MCF 10A (cell line): ENCODE measurements at regions of chr11 and their contacts with region 1.

Region 1: GRCh38 chr11:119205574-119206510 is at the start of gene CBL:
- DNase-seq: peak; percentile 91
- H3K4me3 Mint-ChIP-seq: peak within 1 kb of the TSS; percentile 92
- H3K27ac Mint-ChIP-seq: peak within 1 kb of the TSS; percentile 68
- H3K4me1 Mint-ChIP-seq: peaks cover 6% of the 10 kb centered on the region
- H3K27me3 Mint-ChIP-seq: no peaks in the 10 kb centered on the region
- CTCF ChIP-seq: peak; percentile 90
- total RNA-seq, gene CBL: 35.5 and 45.7 TPM in 2 replicates

Region 2: DNA sequence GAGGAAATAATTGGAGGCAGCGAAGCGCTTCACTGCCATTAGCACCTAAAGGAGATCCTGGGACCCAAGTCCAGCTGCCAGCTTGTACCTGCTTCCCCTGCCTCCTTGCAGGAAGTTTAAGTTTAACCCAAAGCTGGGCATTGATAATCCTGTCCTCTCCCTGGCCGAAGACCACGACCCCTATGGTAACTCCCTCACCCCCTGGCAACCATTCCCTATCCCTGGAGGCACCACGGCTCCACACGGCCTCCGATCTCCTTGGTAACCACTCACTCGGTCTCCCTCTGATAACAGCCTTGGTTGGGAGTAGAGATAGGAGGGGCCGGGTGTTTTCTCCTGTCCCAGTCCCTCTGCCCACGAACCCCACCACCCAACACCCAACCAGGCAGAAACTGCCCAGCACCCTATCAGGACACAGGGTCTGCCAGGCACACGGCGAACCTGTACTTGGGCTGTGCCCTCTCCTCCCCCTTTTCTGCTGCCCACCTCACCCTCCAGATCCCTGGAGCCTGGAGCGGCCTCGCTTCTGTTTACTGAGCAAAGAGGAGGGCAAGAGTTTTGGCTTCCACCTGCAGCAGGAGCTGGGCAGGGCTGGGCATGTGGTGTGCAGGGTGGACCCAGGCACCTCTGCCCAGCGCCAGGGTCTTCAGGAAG is 19.7 kb before region 1 on chr11:
- CTCF ChIA-PET with region 1: no interaction called
- POLR2A ChIA-PET with region 1: no interaction called
- intact Hi-C with region 1: no loop called
- DNase-seq: no peak
- H3K4me3 Mint-ChIP-seq: no peak overlapping the region
- H3K27ac Mint-ChIP-seq: no peak overlapping the region
- H3K4me1 Mint-ChIP-seq: peaks cover 6% of the 10 kb centered on the region
- H3K27me3 Mint-ChIP-seq: peaks cover 22% of the 10 kb centered on the region
- CTCF ChIP-seq: no peak

Region 3: GRCh38 chr11:119218141-119218878 is 12.5 kb after region 1 on chr11:
- CTCF ChIA-PET with region 1: interaction called, 7 read pairs
- POLR2A ChIA-PET with region 1: interaction called, 8 read pairs
- intact Hi-C with region 1: loop called (anchors 1 kb)
- DNase-seq: peak; percentile 91
- H3K4me3 Mint-ChIP-seq: peak overlapping the region; percentile 47
- H3K27ac Mint-ChIP-seq: peak overlapping the region; percentile 88
- H3K4me1 Mint-ChIP-seq: peaks cover 16% of the 10 kb centered on the region
- H3K27me3 Mint-ChIP-seq: no peaks in the 10 kb centered on the region
- CTCF ChIP-seq: no peak

Region 4: DNA sequence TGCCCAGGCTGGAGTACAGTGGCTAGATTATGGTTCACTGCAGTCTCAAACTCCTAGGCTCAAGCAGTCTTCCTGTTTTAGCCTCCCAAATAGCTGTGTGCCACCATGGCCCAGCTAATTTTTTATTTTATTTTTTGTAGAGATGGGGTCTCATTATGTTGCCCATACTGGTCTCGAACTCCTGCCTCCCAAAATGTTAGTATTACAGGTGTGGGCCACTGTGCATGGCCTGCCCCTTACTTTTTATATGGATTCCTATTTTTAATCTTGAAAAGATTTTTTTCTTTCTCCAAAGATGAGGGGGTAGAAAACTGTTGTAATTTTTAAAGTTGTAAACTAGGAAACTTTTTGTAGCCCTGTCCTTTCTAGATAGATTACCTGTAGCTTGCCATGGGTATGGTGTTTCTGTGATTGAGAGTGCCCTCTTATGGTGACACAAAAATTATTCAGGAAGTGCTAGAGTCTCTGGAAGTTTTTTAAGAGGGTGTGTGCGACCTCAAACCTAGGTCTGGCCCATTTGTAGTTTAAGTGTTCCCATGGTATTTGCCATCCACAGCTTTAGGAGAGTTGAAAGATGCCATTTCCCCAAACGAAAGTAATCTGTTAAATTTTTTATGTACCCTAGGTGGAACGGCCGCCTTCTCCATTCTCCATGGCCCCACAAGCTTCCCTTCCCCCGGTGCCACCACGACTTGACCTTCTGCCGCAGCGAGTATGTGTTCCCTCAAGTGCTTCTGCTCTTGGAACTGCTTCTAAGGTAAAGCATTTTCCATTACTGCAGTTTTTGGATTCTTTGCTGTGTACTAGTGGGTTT is 78.7 kb after region 1 on chr11:
- CTCF ChIA-PET with region 1: interaction called, 22 read pairs
- POLR2A ChIA-PET with region 1: interaction called, 12 read pairs
- intact Hi-C with region 1: loop called (anchors 1 kb)
- DNase-seq: peak; percentile 57
- H3K4me3 Mint-ChIP-seq: no peak overlapping the region
- H3K27ac Mint-ChIP-seq: no peak overlapping the region
- H3K4me1 Mint-ChIP-seq: peaks cover 4% of the 10 kb centered on the region
- H3K27me3 Mint-ChIP-seq: no peaks in the 10 kb centered on the region
- CTCF ChIP-seq: peak; percentile 55

Region 5: GRCh38 chr11:119295178-119295577 is 89.3 kb after region 1 on chr11:
- CTCF ChIA-PET with region 1: interaction called, 4 read pairs
- POLR2A ChIA-PET with region 1: no interaction called
- intact Hi-C with region 1: loop called (anchors 5 kb)
- DNase-seq: peak; percentile 47
- H3K4me3 Mint-ChIP-seq: no peak overlapping the region
- H3K27ac Mint-ChIP-seq: no peak overlapping the region
- H3K4me1 Mint-ChIP-seq: no peaks in the 10 kb centered on the region
- H3K27me3 Mint-ChIP-seq: no peaks in the 10 kb centered on the region
- CTCF ChIP-seq: peak; percentile 26